ENCODE measurements at regions of chr21 and their contacts with region 1.

Region 1: GRCh38 chr21:30831194-30831765 is 1.7 kb upstream of the KRTAP7-1 start:
- DNase-seq: peak; percentile 56
- H3K4me3 Mint-ChIP-seq: no peak overlapping the region
- H3K27ac Mint-ChIP-seq: no peak overlapping the region
- H3K4me1 Mint-ChIP-seq: no peaks in the 10 kb centered on the region
- H3K27me3 Mint-ChIP-seq: peaks cover 6% of the 10 kb centered on the region

Region 2: GRCh38 chr21:31604591-31605190 is 773.4 kb after region 1 on chr21:
- CTCF ChIA-PET with region 1: interaction called, 3 read pairs
- POLR2A ChIA-PET with region 1: no interaction called
- intact Hi-C with region 1: loop called (anchors 10 kb)
- DNase-seq: peak; percentile 80
- H3K4me3 Mint-ChIP-seq: no peak overlapping the region
- H3K27ac Mint-ChIP-seq: no peak overlapping the region
- H3K4me1 Mint-ChIP-seq: peaks cover 5% of the 10 kb centered on the region
- H3K27me3 Mint-ChIP-seq: peaks cover 4% of the 10 kb centered on the region